Naive thymus-derived CD4-positive, alpha-beta T cell (primary cell): ENCODE measurements at regions of chr9 and their contacts with region 1.

Region 1: DNA sequence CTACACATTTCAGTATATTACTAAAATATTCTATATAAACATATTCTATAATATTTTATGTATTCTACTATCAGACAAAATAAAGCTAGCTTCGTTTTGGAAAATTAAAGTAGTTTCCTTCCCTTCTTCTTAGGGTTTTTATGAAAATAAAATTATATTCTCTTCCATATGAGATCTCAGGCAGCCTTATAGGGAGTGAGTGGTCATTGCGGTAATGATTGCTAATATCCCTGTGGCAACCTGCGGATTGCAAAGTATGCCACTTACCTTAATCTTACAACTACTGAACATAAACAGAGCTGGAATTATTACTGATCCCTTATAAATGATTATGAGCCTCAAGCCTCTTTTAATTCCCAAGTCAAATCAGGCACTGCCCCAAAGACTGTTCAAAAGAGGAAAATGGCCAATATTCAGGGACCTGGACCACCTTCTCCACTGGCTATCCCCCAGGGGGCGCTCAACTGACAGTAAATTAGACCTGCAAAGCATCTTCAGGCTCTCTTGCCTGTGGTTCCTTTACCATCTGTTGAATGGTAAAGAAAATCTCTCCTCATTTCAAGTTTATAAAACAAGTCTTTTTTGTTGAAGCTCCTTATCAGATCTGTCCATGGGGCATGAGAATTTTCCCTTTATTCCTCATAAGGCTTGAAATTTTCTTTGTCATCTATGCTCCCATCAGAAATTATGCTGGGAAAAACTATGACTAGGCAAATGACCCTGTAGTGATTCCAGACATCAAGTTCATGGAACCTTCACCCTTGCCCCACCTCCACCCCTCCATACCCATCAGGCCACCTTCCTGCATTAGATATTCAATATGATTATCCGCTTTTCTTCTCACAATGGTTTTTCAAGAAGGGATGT is 163.9 kb downstream of the CEMIP2 start:
- DNase-seq: peak; percentile 52 to 80 (median 75)
- ATAC-seq: peak; percentile 89
- H3K4me3 ChIP-seq: no peak overlapping the region
- H3K4me3 Mint-ChIP-seq: no peak overlapping the region
- H3K27ac ChIP-seq: no peak overlapping the region
- H3K27ac Mint-ChIP-seq: no peak overlapping the region
- H3K4me1 ChIP-seq: no peaks in the 10 kb centered on the region
- H3K4me1 Mint-ChIP-seq: peaks cover 0 to 4% (median 0%) of the 10 kb centered on the region in 7 donors
- H3K27me3 ChIP-seq: peaks cover 0 to 3% of the 10 kb centered on the region in 2 donors
- H3K27me3 Mint-ChIP-seq: peaks cover 0 to 29% (median 0%) of the 10 kb centered on the region in 5 donors

Region 2: GRCh38 chr9:71285191-71285656 is 319.2 kb before region 1 on chr9:
- CTCF ChIA-PET with region 1: no interaction called
- POLR2A ChIA-PET with region 1: no interaction called
- intact Hi-C with region 1: loop called (anchors 10 kb)
- DNase-seq: peak in 6 of 9 donors; percentile 10 to 42 (median 36)
- ATAC-seq: peak; percentile 79
- H3K4me3 ChIP-seq: no peak overlapping the region
- H3K4me3 Mint-ChIP-seq: no peak overlapping the region
- H3K27ac ChIP-seq: no peak overlapping the region
- H3K27ac Mint-ChIP-seq: no peak overlapping the region
- H3K4me1 ChIP-seq: no peaks in the 10 kb centered on the region
- H3K4me1 Mint-ChIP-seq: peaks cover 0 to 3% (median 0%) of the 10 kb centered on the region in 7 donors
- H3K27me3 ChIP-seq: no peaks in the 10 kb centered on the region
- H3K27me3 Mint-ChIP-seq: peaks cover 2 to 9% (median 6%) of the 10 kb centered on the region in 5 donors

Region 3: DNA sequence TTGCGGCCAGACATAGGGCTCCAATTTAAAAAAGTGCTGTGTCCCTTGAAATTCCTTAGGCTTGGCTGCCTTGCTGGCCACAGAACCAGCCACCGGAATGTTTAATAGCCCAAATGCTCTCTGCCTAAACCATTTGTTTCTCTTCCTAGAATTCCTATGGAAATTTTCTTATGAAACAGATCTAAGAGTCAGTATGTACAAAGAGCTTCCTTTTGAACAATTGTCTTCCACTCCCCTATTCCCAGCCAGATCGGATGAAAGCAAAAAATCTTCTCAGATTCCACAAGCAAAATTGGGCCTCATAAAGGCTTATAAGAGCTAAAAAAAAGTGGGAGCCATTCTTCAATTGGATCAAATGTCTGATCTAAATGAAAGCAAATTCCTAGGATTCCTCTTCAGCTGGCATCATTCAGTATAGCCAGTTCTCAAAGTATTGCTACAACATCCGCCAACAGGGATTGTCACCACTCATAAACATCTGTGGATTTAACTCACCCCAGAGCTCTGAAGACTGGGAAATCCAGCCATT is 59.6 kb after region 1 on chr9:
- CTCF ChIA-PET with region 1: no interaction called
- POLR2A ChIA-PET with region 1: no interaction called
- intact Hi-C with region 1: no loop called
- DNase-seq: no peak
- ATAC-seq: no peak
- H3K4me3 ChIP-seq: no peak overlapping the region
- H3K4me3 Mint-ChIP-seq: peak overlapping the region in 1 of 10 donors; percentile 15
- H3K27ac ChIP-seq: no peak overlapping the region
- H3K27ac Mint-ChIP-seq: no peak overlapping the region
- H3K4me1 ChIP-seq: no peaks in the 10 kb centered on the region
- H3K4me1 Mint-ChIP-seq: peaks cover 0 to 18% (median 0%) of the 10 kb centered on the region in 7 donors
- H3K27me3 ChIP-seq: no peaks in the 10 kb centered on the region
- H3K27me3 Mint-ChIP-seq: peaks cover 0 to 16% (median 0%) of the 10 kb centered on the region in 5 donors

Region 4: GRCh38 chr9:71692337-71692736 is 87.9 kb after region 1 on chr9:
- CTCF ChIA-PET with region 1: no interaction called
- POLR2A ChIA-PET with region 1: no interaction called
- intact Hi-C with region 1: loop called in 1 of 2 experiments (anchors 5 kb)
- DNase-seq: no peak
- ATAC-seq: peak; percentile 42
- H3K4me3 ChIP-seq: no peak overlapping the region
- H3K4me3 Mint-ChIP-seq: no peak overlapping the region
- H3K27ac ChIP-seq: no peak overlapping the region
- H3K27ac Mint-ChIP-seq: peak overlapping the region in 2 of 9 donors; percentile 60 to 66
- H3K4me1 ChIP-seq: peaks cover 0 to 5% of the 10 kb centered on the region in 2 donors
- H3K4me1 Mint-ChIP-seq: peaks cover 4 to 31% (median 26%) of the 10 kb centered on the region in 7 donors
- H3K27me3 ChIP-seq: no peaks in the 10 kb centered on the region
- H3K27me3 Mint-ChIP-seq: no peaks in the 10 kb centered on the region

Region 5: DNA sequence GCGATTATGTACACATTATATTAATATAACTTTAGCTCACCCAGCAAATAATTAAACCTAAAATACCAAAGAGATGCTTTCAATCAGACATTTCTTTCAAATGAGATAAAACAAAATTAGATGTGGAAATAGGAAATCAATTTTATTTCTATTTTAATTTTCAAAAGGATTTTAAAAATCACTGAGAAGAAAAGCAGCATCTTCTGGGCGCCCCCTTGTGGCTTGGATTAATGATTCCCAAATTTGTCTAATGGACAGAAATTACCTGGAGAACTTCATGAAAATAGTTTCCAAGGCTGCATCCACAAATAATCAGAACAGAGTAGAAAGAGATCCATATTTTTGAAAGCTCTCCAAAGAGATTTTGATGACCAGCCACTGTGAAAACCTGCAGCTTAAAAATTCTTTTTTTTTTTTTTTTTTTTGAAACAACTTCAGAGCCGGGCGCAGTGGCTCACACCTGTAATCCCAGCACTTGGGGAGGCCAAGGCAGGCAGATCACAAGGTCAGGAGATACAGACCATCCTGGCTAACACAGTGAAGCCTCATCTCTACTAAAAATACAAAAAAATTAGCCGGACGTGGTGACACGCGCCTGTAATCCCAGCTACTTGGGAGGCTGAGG is 214.8 kb after region 1 on chr9:
- CTCF ChIA-PET with region 1: interaction called, 20 read pairs
- POLR2A ChIA-PET with region 1: interaction called, 3 read pairs
- intact Hi-C with region 1: loop called (anchors 1 kb)
- DNase-seq: peak in 7 of 9 donors; percentile 26 to 61 (median 55)
- ATAC-seq: no peak
- H3K4me3 ChIP-seq: no peak overlapping the region
- H3K4me3 Mint-ChIP-seq: no peak overlapping the region
- H3K27ac ChIP-seq: no peak overlapping the region
- H3K27ac Mint-ChIP-seq: peak overlapping the region in 3 of 9 donors; percentile 12 to 60 (median 51)
- H3K4me1 ChIP-seq: peaks cover 7 to 8% of the 10 kb centered on the region in 2 donors
- H3K4me1 Mint-ChIP-seq: peaks cover 11 to 35% (median 26%) of the 10 kb centered on the region in 7 donors
- H3K27me3 ChIP-seq: no peaks in the 10 kb centered on the region
- H3K27me3 Mint-ChIP-seq: no peaks in the 10 kb centered on the region

Region 6: GRCh38 chr9:71975833-71976232 is 371.4 kb after region 1 on chr9:
- CTCF ChIA-PET with region 1: no interaction called
- POLR2A ChIA-PET with region 1: interaction called, 3 read pairs
- intact Hi-C with region 1: loop called in 1 of 2 experiments (anchors 5 kb)
- DNase-seq: no peak
- ATAC-seq: no peak
- H3K4me3 ChIP-seq: no peak overlapping the region
- H3K4me3 Mint-ChIP-seq: no peak overlapping the region
- H3K27ac ChIP-seq: no peak overlapping the region
- H3K27ac Mint-ChIP-seq: no peak overlapping the region
- H3K4me1 ChIP-seq: no peaks in the 10 kb centered on the region
- H3K4me1 Mint-ChIP-seq: no peaks in the 10 kb centered on the region
- H3K27me3 ChIP-seq: no peaks in the 10 kb centered on the region
- H3K27me3 Mint-ChIP-seq: no peaks in the 10 kb centered on the region

Region 7: GRCh38 chr9:72271613-72272478 is 667.4 kb after region 1 on chr9:
- CTCF ChIA-PET with region 1: interaction called, 3 read pairs
- POLR2A ChIA-PET with region 1: no interaction called
- intact Hi-C with region 1: loop called (anchors 1 to 10 kb)
- DNase-seq: peak in 6 of 9 donors; percentile 23 to 38 (median 27)
- ATAC-seq: peak; percentile 65
- H3K4me3 ChIP-seq: no peak overlapping the region
- H3K4me3 Mint-ChIP-seq: no peak overlapping the region
- H3K27ac ChIP-seq: no peak overlapping the region
- H3K27ac Mint-ChIP-seq: no peak overlapping the region
- H3K4me1 ChIP-seq: no peaks in the 10 kb centered on the region
- H3K4me1 Mint-ChIP-seq: peaks cover 0 to 5% (median 0%) of the 10 kb centered on the region in 7 donors
- H3K27me3 ChIP-seq: no peaks in the 10 kb centered on the region
- H3K27me3 Mint-ChIP-seq: peaks cover 0 to 20% (median 2%) of the 10 kb centered on the region in 5 donors